ENCODE measurements at regions of chr9 and their contacts with region 1.

Region 1: GRCh38 chr9:23887781-23888180 is 61.7 kb upstream of the ELAVL2 start:
- DNase-seq: no peak
- H3K4me3 Mint-ChIP-seq: no peak overlapping the region
- H3K27ac Mint-ChIP-seq: no peak overlapping the region
- H3K4me1 Mint-ChIP-seq: no peaks in the 10 kb centered on the region
- H3K27me3 Mint-ChIP-seq: peaks cover 71% of the 10 kb centered on the region
- CTCF ChIP-seq: no peak

Region 2: DNA sequence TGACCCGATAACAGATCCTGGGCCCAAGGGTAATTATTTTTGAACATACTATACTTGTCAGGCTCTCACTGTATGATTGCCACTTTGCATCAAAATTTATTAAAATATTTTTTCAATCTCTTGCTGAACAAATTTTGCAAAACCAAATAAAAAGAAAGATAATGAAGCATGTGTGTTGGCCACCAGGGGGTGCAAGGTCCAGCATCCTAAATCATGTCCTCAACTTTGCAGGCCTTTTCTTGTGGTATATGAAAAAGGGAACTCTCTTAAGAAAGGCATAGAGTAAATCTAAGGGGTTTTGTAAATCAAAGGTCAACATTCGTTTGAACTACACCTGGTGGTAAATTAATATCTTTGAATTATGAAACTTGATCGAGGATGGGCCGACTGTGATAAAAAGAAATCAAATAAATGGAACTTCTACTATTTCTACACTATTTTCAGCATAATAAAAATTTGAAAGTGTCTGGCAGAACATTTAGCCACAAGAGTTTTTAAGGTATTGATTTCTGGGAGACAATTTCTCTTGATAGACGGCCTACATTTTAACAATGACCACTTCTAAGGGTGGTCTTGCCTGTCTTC is 764.6 kb before region 1 on chr9:
- CTCF ChIA-PET with region 1: interaction called, 7 read pairs
- POLR2A ChIA-PET with region 1: no interaction called
- intact Hi-C with region 1: loop called (anchors 5 kb)
- DNase-seq: peak; percentile 27
- H3K4me3 Mint-ChIP-seq: no peak overlapping the region
- H3K27ac Mint-ChIP-seq: no peak overlapping the region
- H3K4me1 Mint-ChIP-seq: no peaks in the 10 kb centered on the region
- H3K27me3 Mint-ChIP-seq: peaks cover 23% of the 10 kb centered on the region
- CTCF ChIP-seq: peak; percentile 37